Posterior cingulate gyrus (tissue), 11 donors: ENCODE measurements at regions of chr9 and their contacts with region 1.

Region 1: DNA sequence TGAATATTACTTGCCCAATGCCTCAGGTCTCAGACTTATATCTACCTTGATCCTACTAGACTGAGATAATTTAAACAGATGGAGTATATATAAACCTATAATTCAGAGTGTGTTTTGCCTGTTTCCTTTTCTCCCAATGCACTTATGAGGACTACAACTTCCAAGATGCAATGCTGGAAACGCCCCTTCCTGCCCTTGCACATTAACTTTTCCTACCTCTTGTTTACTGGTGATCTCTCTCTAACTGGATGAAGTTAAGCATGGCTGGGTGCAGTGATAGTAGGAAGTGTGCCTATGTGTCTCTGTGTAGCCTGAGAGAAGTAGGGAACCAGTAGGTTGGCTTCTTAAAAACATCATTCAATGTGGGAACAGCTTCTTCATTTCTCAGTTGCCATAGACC is 115.2 kb downstream of the SVEP1 start:
- DNase-seq: no peak

Region 2: DNA sequence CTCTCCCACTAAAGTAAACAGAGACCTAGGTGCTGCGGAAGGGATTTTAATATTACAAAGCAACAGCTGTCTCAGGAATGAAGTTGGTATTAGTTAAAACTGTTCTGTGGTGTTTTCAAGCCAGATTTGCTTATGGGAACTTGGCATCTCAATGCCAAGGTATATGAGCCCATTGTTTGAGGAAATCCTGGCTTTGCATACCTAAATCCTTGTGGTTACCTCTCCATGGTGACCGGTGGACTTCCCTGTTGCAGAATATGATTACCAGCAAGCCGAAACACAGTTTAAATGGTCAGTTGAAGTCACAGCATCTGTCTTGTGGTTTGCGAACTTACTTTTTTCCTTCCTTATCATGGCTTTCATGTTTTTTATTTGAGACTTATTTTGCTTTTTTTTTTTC is 64.3 kb before region 1 on chr9:
- intact Hi-C with region 1: loop called (anchors 10 kb)
- DNase-seq: no peak